CD8-positive, alpha-beta T cell (primary cell): ENCODE measurements at regions of chr7 and their contacts with region 1.

Region 1: DNA sequence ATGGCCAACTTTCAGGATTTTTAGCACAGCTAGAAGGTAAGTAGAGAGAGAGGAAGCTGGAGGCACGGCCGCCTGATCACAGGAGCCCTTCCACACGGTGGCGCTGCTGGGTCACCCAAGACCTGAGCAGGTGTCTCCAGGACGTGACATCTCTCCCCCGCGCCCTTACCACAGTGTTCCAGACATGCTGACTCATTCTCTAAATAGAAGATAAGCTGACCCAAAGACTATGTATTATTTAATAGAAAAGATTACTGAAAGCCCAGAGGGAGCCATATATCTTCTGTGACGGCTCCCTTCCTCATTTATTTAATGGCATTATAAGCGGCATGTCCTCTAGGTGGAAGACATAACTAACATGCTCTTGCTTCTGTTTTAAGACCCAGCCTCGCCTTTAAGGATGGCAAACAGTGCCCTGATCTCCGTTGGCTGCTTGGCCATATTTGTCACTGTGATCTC is 26.0 kb upstream of the MALSU1 start:
- DNase-seq: peak; percentile 78 to 91 (median 89)
- ATAC-seq: peak; percentile 97
- H3K4me3 ChIP-seq: peak overlapping the region in 1 of 2 experiments; percentile 16
- H3K4me3 Mint-ChIP-seq: peak overlapping the region; percentile 70
- H3K27ac ChIP-seq: no peak overlapping the region
- H3K27ac Mint-ChIP-seq: no peak overlapping the region
- H3K4me1 ChIP-seq: no peaks in the 10 kb centered on the region
- H3K4me1 Mint-ChIP-seq: peaks cover 4% of the 10 kb centered on the region
- H3K27me3 ChIP-seq: no peaks in the 10 kb centered on the region
- H3K27me3 Mint-ChIP-seq: peaks cover 6% of the 10 kb centered on the region
- CTCF ChIP-seq: peak; percentile 82

Region 2: GRCh38 chr7:22872096-22872807 is 400.9 kb before region 1 on chr7:
- CTCF ChIA-PET with region 1: no interaction called
- POLR2A ChIA-PET with region 1: no interaction called
- intact Hi-C with region 1: no loop called
- DNase-seq: peak in 2 of 9 experiments; percentile 10 to 14
- ATAC-seq: peak; percentile 51
- H3K4me3 ChIP-seq: no peak overlapping the region
- H3K4me3 Mint-ChIP-seq: no peak overlapping the region
- H3K27ac ChIP-seq: no peak overlapping the region
- H3K27ac Mint-ChIP-seq: no peak overlapping the region
- H3K4me1 ChIP-seq: no peaks in the 10 kb centered on the region
- H3K4me1 Mint-ChIP-seq: no peaks in the 10 kb centered on the region
- H3K27me3 ChIP-seq: no peaks in the 10 kb centered on the region
- H3K27me3 Mint-ChIP-seq: no peaks in the 10 kb centered on the region
- CTCF ChIP-seq: no peak

Region 3: GRCh38 chr7:23291957-23292560 is 18.9 kb after region 1 on chr7:
- CTCF ChIA-PET with region 1: interaction called, 18 read pairs
- POLR2A ChIA-PET with region 1: no interaction called
- intact Hi-C with region 1: no loop called
- DNase-seq: no peak
- ATAC-seq: no peak
- H3K4me3 ChIP-seq: no peak overlapping the region
- H3K4me3 Mint-ChIP-seq: no peak overlapping the region
- H3K27ac ChIP-seq: no peak overlapping the region
- H3K27ac Mint-ChIP-seq: no peak overlapping the region
- H3K4me1 ChIP-seq: no peaks in the 10 kb centered on the region
- H3K4me1 Mint-ChIP-seq: peaks cover 15% of the 10 kb centered on the region
- H3K27me3 ChIP-seq: no peaks in the 10 kb centered on the region
- H3K27me3 Mint-ChIP-seq: no peaks in the 10 kb centered on the region
- CTCF ChIP-seq: no peak

Region 4: DNA sequence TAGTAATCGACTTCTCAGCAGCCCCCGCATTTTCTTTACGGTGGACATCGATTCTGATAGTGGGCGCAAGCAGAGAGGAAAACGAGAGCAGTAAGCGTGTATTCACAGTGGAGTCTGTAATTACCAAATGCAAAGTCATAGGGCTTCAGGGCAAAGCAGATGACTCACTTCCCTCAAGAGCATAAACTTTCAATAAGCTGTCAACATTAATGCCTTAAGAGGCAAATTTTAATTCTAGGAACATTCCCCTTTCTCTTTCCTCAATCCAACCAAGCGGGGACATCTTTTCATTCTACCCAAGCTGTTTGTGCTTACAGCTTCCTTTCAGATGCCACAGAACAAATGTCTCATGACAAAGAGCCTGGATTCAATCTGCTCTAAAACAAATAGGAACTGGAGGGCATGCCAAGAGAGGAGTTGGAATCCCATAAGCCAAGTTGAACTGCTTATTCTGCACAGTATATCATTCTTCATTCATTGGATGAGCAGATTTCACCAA is 74.6 kb after region 1 on chr7:
- CTCF ChIA-PET with region 1: interaction called, 27 read pairs
- POLR2A ChIA-PET with region 1: no interaction called
- intact Hi-C with region 1: loop called in 1 of 2 experiments (anchors 5 kb)
- DNase-seq: no peak
- ATAC-seq: no peak
- H3K4me3 ChIP-seq: no peak overlapping the region
- H3K4me3 Mint-ChIP-seq: peak overlapping the region; percentile 66
- H3K27ac ChIP-seq: no peak overlapping the region
- H3K27ac Mint-ChIP-seq: no peak overlapping the region
- H3K4me1 ChIP-seq: peaks cover 8% of the 10 kb centered on the region
- H3K4me1 Mint-ChIP-seq: peaks cover 19% of the 10 kb centered on the region
- H3K27me3 ChIP-seq: peaks cover 0 to under 1% of the 10 kb centered on the region in 2 experiments
- H3K27me3 Mint-ChIP-seq: no peaks in the 10 kb centered on the region
- CTCF ChIP-seq: no peak

Region 5: GRCh38 chr7:23462846-23463245 is 189.7 kb after region 1 on chr7:
- CTCF ChIA-PET with region 1: interaction called, 23 read pairs
- POLR2A ChIA-PET with region 1: no interaction called
- intact Hi-C with region 1: loop called in 1 of 2 experiments (anchors 2 kb)
- DNase-seq: peak in 2 of 9 experiments; percentile 18 to 40
- ATAC-seq: no peak
- H3K4me3 ChIP-seq: no peak overlapping the region
- H3K4me3 Mint-ChIP-seq: no peak overlapping the region
- H3K27ac ChIP-seq: no peak overlapping the region
- H3K27ac Mint-ChIP-seq: no peak overlapping the region
- H3K4me1 ChIP-seq: peaks cover 3% of the 10 kb centered on the region
- H3K4me1 Mint-ChIP-seq: peaks cover 7% of the 10 kb centered on the region
- H3K27me3 ChIP-seq: peaks cover 18 to 36% of the 10 kb centered on the region in 2 experiments
- H3K27me3 Mint-ChIP-seq: peaks cover 69% of the 10 kb centered on the region
- CTCF ChIP-seq: no peak

Region 6: DNA sequence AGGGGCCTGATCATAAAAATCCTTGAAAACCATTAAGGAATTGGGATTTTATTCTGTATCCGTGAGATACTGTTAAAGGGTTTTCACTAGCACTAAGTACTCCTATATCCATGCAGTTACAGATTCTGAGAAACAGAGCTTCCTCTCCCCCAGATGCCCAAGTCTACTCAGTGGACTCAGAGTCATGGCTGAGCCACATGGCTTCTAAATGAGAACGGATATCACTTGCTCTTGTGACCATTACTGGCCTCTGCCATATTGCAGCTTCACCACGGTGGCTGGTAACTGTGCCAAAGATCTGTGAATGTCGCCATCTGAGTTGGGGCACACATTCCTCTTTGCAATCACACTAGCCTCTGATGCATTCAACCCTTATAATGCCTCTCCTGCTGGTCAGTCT is 1258.1 kb after region 1 on chr7:
- CTCF ChIA-PET with region 1: no interaction called
- POLR2A ChIA-PET with region 1: no interaction called
- intact Hi-C with region 1: no loop called
- DNase-seq: no peak
- ATAC-seq: no peak
- H3K4me3 ChIP-seq: no peak overlapping the region
- H3K4me3 Mint-ChIP-seq: no peak overlapping the region
- H3K27ac ChIP-seq: no peak overlapping the region
- H3K27ac Mint-ChIP-seq: no peak overlapping the region
- H3K4me1 ChIP-seq: no peaks in the 10 kb centered on the region
- H3K4me1 Mint-ChIP-seq: no peaks in the 10 kb centered on the region
- H3K27me3 ChIP-seq: no peaks in the 10 kb centered on the region
- H3K27me3 Mint-ChIP-seq: no peaks in the 10 kb centered on the region
- CTCF ChIP-seq: no peak